KBM-7 (cell line): ENCODE measurements at regions of chr9 and their contacts with region 1.

Region 1: DNA sequence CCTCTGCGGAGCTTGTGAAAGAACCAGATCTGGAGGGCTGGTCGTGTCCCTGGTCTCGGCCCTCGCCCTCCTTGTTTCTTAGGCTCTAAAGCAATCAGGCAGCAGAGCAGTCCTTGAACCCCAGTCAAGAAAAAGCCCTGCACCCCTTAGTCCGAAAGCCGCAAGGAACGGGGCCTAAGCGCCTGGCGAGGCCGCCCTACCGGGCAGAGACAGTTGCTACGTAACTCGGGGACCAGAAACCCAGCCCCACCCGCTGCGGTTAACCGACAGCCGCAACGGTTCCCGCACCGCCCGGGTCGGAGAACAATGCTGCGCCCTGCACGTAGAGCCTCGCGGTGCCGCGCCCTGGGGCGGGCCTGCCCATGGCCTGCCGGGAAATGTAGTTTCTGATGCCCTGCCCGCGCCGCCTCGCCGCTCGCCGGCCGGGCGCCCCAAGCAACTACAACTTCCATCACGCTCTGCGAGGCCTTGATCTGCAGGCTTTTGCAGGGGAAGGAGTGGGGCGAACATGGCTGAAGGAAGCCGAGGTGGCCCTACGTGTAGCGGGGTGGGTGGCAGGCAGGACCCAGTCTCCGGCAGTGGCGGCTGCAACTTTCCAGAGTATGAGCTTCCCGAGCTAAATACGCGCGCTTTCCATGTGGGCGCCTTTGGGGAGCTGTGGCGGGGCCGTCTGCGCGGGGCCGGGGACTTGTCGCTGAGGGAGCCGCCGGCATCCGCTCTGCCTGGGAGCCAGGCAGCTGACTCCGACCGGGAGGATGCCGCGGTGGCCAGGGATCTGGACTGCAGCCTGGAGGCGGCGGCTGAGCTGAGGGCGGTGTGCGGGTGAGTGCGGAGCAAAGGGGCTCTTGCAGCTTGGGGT is at the start of gene SNAPC3:
- DNase-seq: peak; percentile 97

Region 2: DNA sequence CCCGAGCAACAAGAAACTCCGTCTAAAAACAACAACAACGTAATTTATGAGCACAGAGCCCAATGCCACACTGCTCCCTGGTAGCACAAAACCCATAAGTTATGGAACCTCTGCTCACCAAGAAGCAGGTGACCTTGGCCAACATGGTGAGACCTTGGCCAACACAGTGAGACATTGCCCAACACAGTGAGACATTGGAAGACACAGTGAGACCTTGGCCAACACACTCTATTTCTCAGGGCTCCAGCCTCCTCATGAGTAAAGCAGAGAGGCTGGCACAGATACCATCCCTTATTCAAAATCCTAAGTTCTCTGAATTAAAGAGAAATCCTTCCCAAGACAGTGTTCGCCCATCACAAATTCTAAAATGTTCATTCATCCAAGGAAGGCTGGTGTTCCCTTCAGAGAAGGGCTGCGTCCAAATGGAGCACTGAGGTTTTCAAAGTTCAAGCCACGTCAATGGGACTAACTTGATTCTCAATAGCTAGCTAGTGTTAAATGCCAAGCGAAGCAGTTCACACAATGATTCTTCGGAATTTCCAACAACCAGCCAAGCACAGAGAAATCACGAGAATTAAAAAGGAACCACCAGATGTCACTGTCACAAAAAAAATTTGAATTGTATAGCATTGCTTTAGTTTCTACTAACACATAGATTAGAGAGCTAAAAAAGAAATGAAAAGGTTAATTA is 145.1 kb before region 1 on chr9:
- in situ Hi-C with region 1: loop called (anchors 25 kb)
- DNase-seq: peak; percentile 48